ENCODE measurements at regions of chr16 and their contacts with region 1.

Region 1: DNA sequence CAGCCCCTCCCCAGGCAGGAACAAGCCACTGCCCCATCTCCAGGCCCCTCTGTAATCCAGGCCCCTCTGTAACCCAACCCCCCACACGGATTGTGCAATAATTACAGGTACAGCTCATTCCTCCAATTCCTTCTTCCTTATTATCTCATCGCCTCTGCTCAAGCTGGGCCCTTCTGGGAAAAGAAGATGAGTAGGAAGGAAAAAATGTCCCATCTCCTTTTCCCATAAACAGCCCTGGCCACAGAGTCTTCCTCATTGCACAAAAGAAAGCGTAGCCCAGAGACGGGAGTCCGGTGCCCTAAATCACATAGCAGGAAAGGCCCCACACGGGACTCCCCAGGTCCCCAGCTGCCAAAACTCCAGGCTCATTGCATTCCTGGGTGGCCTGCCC is 3.6 kb upstream of the LITAFD start:
- DNase-seq: no peak
- ATAC-seq: no peak
- H3K4me3 Mint-ChIP-seq: no peak overlapping the region
- H3K27ac Mint-ChIP-seq: no peak overlapping the region
- H3K4me1 Mint-ChIP-seq: peaks cover 6% of the 10 kb centered on the region
- H3K27me3 Mint-ChIP-seq: no peaks in the 10 kb centered on the region
- CTCF ChIP-seq: no peak

Region 2: GRCh38 chr16:8660841-8661301 is 217.6 kb before region 1 on chr16:
- CTCF ChIA-PET with region 1: interaction called, 9 read pairs
- POLR2A ChIA-PET with region 1: no interaction called
- intact Hi-C with region 1: loop called (anchors 1 kb)
- DNase-seq: no peak
- ATAC-seq: peak; percentile 45
- H3K4me3 Mint-ChIP-seq: no peak overlapping the region
- H3K27ac Mint-ChIP-seq: no peak overlapping the region
- H3K4me1 Mint-ChIP-seq: no peaks in the 10 kb centered on the region
- H3K27me3 Mint-ChIP-seq: no peaks in the 10 kb centered on the region
- CTCF ChIP-seq: no peak

Region 3: DNA sequence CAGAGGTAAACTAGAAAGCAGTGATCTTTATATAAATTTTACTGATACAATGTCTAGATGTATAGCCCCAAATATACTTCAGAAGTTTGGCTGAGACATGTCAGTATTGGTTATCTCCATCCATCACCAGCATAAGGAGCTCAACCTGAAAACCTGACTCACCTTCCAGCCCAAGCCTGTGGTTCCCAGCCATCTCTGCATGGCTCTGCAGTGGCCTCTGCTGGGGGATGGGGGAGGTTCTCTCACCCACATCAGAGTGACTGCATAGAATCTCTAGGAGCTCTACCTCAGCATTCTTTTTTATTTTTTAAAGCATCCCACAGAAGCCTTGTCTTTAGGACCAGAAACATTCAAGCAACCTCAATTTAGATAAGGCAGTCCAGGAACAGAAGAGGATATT is 57.9 kb after region 1 on chr16:
- CTCF ChIA-PET with region 1: interaction called, 11 read pairs
- POLR2A ChIA-PET with region 1: no interaction called
- intact Hi-C with region 1: no loop called
- DNase-seq: no peak
- ATAC-seq: peak; percentile 98
- H3K4me3 Mint-ChIP-seq: no peak overlapping the region
- H3K27ac Mint-ChIP-seq: peak overlapping the region; percentile 50
- H3K4me1 Mint-ChIP-seq: peaks cover 92% of the 10 kb centered on the region
- H3K27me3 Mint-ChIP-seq: no peaks in the 10 kb centered on the region
- CTCF ChIP-seq: no peak

Measured in activated B cell treated with CpG ODN at 0.5 μM for 24 hours (primary cell).